ENCODE measurements at regions of chr19 and their contacts with region 1.

Region 1: GRCh38 chr19:35585848-35586247 is at the start of gene PMIS2:
- DNase-seq: peak in 1 of 2 donors; percentile 19
- ATAC-seq: peak in 1 of 3 donors; percentile 68
- H3K4me3 ChIP-seq: no peak within 1 kb of the TSS
- H3K4me3 Mint-ChIP-seq: no peak within 1 kb of the TSS
- H3K27ac ChIP-seq: no peak within 1 kb of the TSS
- H3K27ac Mint-ChIP-seq: no peak within 1 kb of the TSS
- H3K4me1 ChIP-seq: no peaks in the 10 kb centered on the region
- H3K4me1 Mint-ChIP-seq: no peaks in the 10 kb centered on the region
- H3K27me3 ChIP-seq: no peaks in the 10 kb centered on the region
- H3K27me3 Mint-ChIP-seq: peaks cover 19 to 25% of the 10 kb centered on the region in 2 donors
- CTCF ChIP-seq: no peak
- total RNA-seq, gene PMIS2: not detected

Region 2: GRCh38 chr19:35545001-35545911 is 40.6 kb before region 1 on chr19 and contains the start of gene TMEM147:
- intact Hi-C with region 1: loop called (anchors 5 kb)
- DNase-seq: peak; percentile 79 to 83
- ATAC-seq: peak; percentile 73 to 87 (median 81)
- H3K4me3 ChIP-seq: peak within 1 kb of the TSS; percentile 95
- H3K4me3 Mint-ChIP-seq: peak within 1 kb of the TSS; percentile 95
- H3K27ac ChIP-seq: peak within 1 kb of the TSS; percentile 77
- H3K27ac Mint-ChIP-seq: peak within 1 kb of the TSS; percentile 80 to 91
- H3K4me1 ChIP-seq: peaks cover 28% of the 10 kb centered on the region
- H3K4me1 Mint-ChIP-seq: peaks cover 34 to 49% of the 10 kb centered on the region in 2 donors
- H3K27me3 ChIP-seq: no peaks in the 10 kb centered on the region
- H3K27me3 Mint-ChIP-seq: no peaks in the 10 kb centered on the region
- CTCF ChIP-seq: no peak
- total RNA-seq, gene TMEM147: 30.6 to 37.9 (median 31.2) TPM

Region 3: GRCh38 chr19:35689666-35690225 is 103.9 kb after region 1 on chr19:
- intact Hi-C with region 1: no loop called
- DNase-seq: no peak
- ATAC-seq: no peak
- H3K4me3 ChIP-seq: no peak overlapping the region
- H3K4me3 Mint-ChIP-seq: no peak overlapping the region
- H3K27ac ChIP-seq: no peak overlapping the region
- H3K27ac Mint-ChIP-seq: no peak overlapping the region
- H3K4me1 ChIP-seq: no peaks in the 10 kb centered on the region
- H3K4me1 Mint-ChIP-seq: no peaks in the 10 kb centered on the region
- H3K27me3 ChIP-seq: no peaks in the 10 kb centered on the region
- H3K27me3 Mint-ChIP-seq: no peaks in the 10 kb centered on the region
- CTCF ChIP-seq: no peak

Measured in natural killer cell (primary cell).